Dorsolateral prefrontal cortex (tissue), 120 donors: ENCODE measurements at regions of chr7 and their contacts with region 1.

Region 1: DNA sequence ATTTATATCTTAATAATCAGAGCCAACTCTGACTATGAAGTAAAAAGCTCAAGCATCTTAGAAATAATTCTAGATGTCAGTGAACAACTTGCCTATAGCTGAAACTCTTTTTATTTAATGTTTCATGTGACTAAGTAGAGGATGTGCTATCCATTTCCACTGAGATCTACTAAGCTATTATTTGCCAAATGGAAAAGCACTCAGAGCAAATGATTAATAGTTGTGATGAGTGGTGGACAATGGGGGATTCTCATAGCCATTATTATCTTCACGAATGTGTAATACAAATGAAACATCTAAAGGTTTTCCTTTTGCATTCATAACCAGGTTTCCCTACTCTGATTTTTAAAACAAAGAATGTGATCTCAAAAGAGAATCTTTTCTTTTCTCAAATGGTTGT is 126.6 kb upstream of the GNAI1 start:
- DNase-seq: no peak
- H3K4me3 ChIP-seq: no peak overlapping the region
- H3K27ac ChIP-seq: no peak overlapping the region
- H3K27me3 ChIP-seq: no peaks in the 10 kb centered on the region
- CTCF ChIP-seq: no peak

Region 2: GRCh38 chr7:79245623-79246249 is 762.3 kb before region 1 on chr7:
- intact Hi-C with region 1: loop called in 1 of 2 experiments (anchors 5 kb)
- DNase-seq: no peak
- H3K4me3 ChIP-seq: no peak overlapping the region
- H3K27ac ChIP-seq: no peak overlapping the region
- H3K27me3 ChIP-seq: no peaks in the 10 kb centered on the region
- CTCF ChIP-seq: no peak